Ovary (tissue), 10 donors: ENCODE measurements at regions of chr16 and their contacts with region 1.

Region 1: DNA sequence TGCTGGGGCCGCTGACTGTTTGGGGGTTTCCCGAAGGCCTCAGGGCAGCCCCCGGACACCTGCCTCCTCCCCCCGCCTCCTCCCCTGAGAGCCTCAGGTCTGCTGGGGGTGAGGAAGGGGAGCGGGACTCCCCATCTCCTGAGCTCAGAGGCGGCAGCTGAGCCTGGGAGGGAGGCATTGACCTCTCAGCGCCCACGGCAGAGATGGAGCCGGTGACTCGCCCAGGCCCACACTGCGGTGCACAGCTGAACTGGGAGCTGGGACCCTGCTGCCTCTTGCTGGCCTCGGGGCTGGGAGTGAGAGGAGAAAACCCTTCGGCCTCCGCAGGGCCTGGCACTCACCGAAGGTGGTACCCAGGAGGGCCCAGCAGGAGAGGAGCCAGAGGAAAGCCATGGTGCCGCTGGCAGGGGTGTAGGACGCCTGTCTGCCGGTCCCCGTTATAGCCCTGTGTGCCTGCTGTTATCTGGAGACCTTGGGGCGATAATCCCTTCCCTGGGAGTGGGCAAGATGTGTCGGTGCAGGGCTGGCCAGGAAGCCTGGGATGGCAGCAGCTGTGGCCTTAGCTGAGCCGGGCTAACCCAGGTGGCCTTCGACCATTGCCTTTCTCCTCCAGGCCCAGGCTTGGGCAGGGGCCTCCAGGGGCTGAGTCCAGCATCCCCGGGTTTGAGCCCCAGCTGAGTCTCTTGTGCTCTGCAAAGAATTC is at the start of gene CTRB2:
- DNase-seq: no peak
- H3K4me3 ChIP-seq: no peak within 1 kb of the TSS
- H3K27ac ChIP-seq: no peak within 1 kb of the TSS
- H3K4me1 ChIP-seq: no peaks in the 10 kb centered on the region
- H3K27me3 ChIP-seq: no peaks in the 10 kb centered on the region
- CTCF ChIP-seq: no peak
- EP300 ChIP-seq: no peak
- POLR2A ChIP-seq: no peak
- total RNA-seq, gene CTRB2: 0.62 to 28.7 (median 11.6) TPM in 4 of 7 donors, not detected in the others

Region 2: GRCh38 chr16:75087375-75087979 is 119.4 kb before region 1 on chr16:
- intact Hi-C with region 1: no loop called
- DNase-seq: peak in 2 of 5 donors; percentile 24 to 41
- H3K4me3 ChIP-seq: no peak overlapping the region
- H3K27ac ChIP-seq: peak overlapping the region in 1 of 2 donors; percentile 17
- H3K4me1 ChIP-seq: peaks cover 14% of the 10 kb centered on the region
- H3K27me3 ChIP-seq: no peaks in the 10 kb centered on the region
- CTCF ChIP-seq: no peak
- EP300 ChIP-seq: no peak
- POLR2A ChIP-seq: no peak

Region 3: GRCh38 chr16:75224306-75225091 is 17.6 kb after region 1 on chr16:
- intact Hi-C with region 1: loop called in 3 of 4 experiments (anchors 1 to 2 kb)
- DNase-seq: no peak
- H3K4me3 ChIP-seq: no peak overlapping the region
- H3K27ac ChIP-seq: no peak overlapping the region
- H3K4me1 ChIP-seq: no peaks in the 10 kb centered on the region
- H3K27me3 ChIP-seq: no peaks in the 10 kb centered on the region
- CTCF ChIP-seq: no peak
- EP300 ChIP-seq: no peak
- POLR2A ChIP-seq: no peak

Region 4: DNA sequence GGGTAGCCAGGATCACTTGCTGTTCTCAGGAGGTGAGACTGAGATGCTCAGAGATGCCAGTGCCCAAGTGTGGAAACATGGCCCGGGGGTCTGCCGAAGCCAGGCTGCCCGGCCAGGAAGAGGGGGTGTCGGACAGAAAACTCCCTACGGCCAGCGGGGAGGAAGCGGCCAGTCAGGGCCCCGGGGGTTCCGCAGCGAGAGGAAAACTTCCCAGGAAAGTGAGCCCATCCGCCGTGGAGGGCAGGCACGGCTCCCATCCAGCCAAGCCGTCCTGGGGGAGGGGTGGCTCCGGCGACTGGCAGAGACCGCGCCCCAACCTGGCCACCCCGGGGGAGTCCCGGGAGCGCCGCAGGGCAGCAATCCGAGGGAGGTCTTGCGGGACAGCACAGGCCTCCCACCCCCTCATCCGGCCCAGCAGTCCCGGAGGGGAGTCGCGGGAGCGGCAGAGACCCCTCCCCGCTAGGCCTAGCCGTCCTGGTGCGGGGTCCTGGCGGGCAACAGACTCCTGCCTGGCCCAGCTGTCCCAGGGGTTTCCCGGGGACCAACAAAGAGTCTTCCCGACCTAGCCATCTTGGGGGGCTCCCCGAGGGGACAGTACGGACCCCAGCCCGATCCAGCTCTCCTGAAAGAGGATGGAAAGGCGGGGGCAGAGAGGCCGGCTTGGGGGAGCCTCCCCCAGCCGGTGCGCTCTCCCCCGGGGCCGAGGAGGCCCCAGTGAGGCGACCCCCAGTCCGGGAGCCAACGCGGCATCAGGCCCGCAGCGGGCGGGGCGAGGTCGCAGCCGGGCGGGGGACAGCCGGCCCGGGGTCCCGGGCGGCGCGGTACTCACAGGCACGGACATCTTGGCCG is 58.3 kb after region 1 on chr16:
- intact Hi-C with region 1: no loop called
- DNase-seq: peak in 4 of 5 donors; percentile 54 to 72 (median 64)
- H3K4me3 ChIP-seq: peak overlapping the region; percentile 65
- H3K27ac ChIP-seq: peak overlapping the region; percentile 78 to 84
- H3K4me1 ChIP-seq: peaks cover 38% of the 10 kb centered on the region
- H3K27me3 ChIP-seq: no peaks in the 10 kb centered on the region
- CTCF ChIP-seq: no peak
- EP300 ChIP-seq: no peak
- POLR2A ChIP-seq: peak; percentile 28

Region 5: GRCh38 chr16:75288596-75289120 is 81.8 kb after region 1 on chr16:
- intact Hi-C with region 1: no loop called
- DNase-seq: no peak
- H3K4me3 ChIP-seq: no peak overlapping the region
- H3K27ac ChIP-seq: no peak overlapping the region
- H3K4me1 ChIP-seq: peaks cover 2% of the 10 kb centered on the region
- H3K27me3 ChIP-seq: no peaks in the 10 kb centered on the region
- CTCF ChIP-seq: no peak
- EP300 ChIP-seq: no peak
- POLR2A ChIP-seq: no peak